ENCODE measurements at regions of chr16 and their contacts with region 1.

Region 1: GRCh38 chr16:82229796-82230619 is 60.0 kb upstream of the MPHOSPH6 start:
- DNase-seq: peak; percentile 11 to 80 (median 56)
- H3K4me3 ChIP-seq: no peak overlapping the region
- H3K27ac ChIP-seq: no peak overlapping the region
- H3K27me3 ChIP-seq: peaks cover 0 to 16% (median 0%) of the 10 kb centered on the region in 45 donors
- CTCF ChIP-seq: peak; percentile 58 to 97 (median 90)

Region 2: DNA sequence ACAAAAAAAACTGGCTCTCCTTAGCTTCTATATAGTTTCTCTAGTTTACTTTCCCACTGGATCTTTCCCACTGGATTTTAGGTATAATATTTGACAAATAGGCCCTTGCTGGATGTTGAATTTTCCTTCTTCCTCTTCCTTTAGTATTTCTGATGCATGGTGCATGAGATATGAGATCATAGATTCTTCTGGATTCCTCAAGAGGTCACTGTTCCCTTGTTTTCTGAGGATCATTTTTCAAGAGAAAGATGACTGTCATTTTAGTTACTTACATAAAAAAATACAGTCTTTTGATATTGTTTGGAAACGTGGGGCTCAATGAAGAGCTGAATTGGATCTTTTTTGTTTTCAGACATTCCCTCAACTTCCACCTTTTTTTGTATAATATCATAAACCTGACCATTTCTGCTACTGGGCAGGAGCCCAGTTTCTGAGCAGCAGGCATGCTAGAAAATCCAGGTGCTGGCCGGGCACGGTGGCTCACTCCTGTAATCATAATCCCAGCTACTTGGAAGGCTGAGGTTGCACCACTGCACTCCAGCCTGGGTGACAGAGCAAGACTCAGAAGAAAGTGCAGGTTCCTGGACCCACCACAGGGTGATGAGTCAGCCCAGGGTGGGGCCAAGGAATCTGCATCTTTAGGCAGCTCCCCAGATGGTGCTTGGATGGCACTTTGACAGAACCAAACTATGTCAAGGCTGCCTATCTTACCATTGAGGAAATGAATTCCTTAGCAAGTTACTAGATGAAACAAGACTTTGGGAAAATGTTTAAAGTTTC is 289.0 kb before region 1 on chr16:
- intact Hi-C with region 1: loop called in 1 of 2 experiments (anchors 2 kb)
- DNase-seq: no peak
- H3K4me3 ChIP-seq: no peak overlapping the region
- H3K27ac ChIP-seq: no peak overlapping the region
- H3K27me3 ChIP-seq: peaks cover 0 to 19% (median 0%) of the 10 kb centered on the region in 45 donors
- CTCF ChIP-seq: peak in 55 of 56 donors; percentile 34 to 76 (median 53)

Region 3: GRCh38 chr16:82031116-82032084 is 198.6 kb before region 1 on chr16:
- intact Hi-C with region 1: loop called (anchors 2 to 5 kb)
- DNase-seq: no peak
- H3K4me3 ChIP-seq: no peak overlapping the region
- H3K27ac ChIP-seq: no peak overlapping the region
- H3K27me3 ChIP-seq: peaks cover 0 to 25% (median 0%) of the 10 kb centered on the region in 45 donors
- CTCF ChIP-seq: peak in 55 of 56 donors; percentile 30 to 80 (median 60)

Measured in dorsolateral prefrontal cortex (tissue), 120 donors.